OCI-LY7 (cell line): ENCODE measurements at regions of chr2 and their contacts with region 1.

Region 1: DNA sequence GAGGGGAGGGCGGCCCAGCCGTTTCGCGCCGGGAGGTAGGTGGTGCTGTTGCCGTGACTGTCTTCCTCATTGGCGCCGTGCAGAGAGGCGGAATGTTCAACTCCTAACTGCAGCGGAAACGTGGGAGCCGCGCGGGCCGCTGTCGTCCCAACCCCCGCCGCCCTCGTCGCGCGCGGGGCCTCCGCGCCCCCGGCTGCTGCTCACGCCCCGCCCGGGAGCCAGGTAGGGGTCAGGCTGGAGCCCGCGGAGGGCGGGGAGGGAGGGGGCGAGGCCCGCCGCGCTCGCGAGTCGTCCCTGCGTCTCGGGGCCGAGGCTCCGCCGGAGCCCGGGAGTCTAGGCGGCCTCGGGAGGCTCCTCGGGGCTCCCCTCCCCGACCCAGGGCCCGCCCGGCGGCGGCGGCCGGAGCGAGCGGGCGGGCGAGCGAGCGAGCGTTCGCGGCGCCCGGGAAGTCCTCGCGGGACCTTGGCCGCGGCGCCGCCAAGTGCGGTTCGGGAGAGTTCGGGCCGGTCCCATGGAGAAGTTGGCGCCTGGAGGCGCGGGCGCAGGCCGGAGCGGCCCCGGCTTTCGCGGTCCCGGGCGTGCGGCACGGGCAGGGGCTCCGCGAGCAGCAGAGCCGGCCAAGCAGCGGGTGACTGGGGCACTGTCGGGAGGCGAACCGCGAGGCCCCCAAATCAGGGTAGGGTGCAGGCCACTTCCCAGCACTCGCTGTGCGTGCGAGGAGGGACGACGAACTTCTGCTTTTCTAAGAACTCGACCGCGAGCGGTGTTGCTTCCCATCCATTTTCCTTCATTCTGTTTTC is at the start of gene MAP3K20:
- DNase-seq: peak; percentile 78
- H3K4me3 ChIP-seq: peak within 1 kb of the TSS; percentile 76
- H3K27ac ChIP-seq: peak within 1 kb of the TSS; percentile 39
- H3K4me1 ChIP-seq: peaks cover 14% of the 10 kb centered on the region
- CTCF ChIP-seq: peak; percentile 61
- total RNA-seq, gene MAP3K20: 8.2 and 9.1 TPM in 2 replicates

Region 2: GRCh38 chr2:173059927-173060565 is 15.9 kb before region 1 on chr2:
- CTCF ChIA-PET with region 1: interaction called, 5 read pairs
- POLR2A ChIA-PET with region 1: interaction called, 12 read pairs
- intact Hi-C with region 1: no loop called
- DNase-seq: peak; percentile 17
- H3K4me3 ChIP-seq: peak overlapping the region; percentile 20
- H3K27ac ChIP-seq: peak overlapping the region; percentile 57
- H3K4me1 ChIP-seq: peaks cover 23% of the 10 kb centered on the region
- CTCF ChIP-seq: no peak

Region 3: GRCh38 chr2:173119069-173119807 is 43.3 kb after region 1 on chr2:
- CTCF ChIA-PET with region 1: no interaction called
- POLR2A ChIA-PET with region 1: interaction called, 11 read pairs
- intact Hi-C with region 1: no loop called
- DNase-seq: no peak
- H3K4me3 ChIP-seq: no peak overlapping the region
- H3K27ac ChIP-seq: no peak overlapping the region
- H3K4me1 ChIP-seq: no peaks in the 10 kb centered on the region
- CTCF ChIP-seq: no peak

Region 4: GRCh38 chr2:173210270-173211196 is 134.6 kb after region 1 on chr2:
- CTCF ChIA-PET with region 1: no interaction called
- POLR2A ChIA-PET with region 1: interaction called, 6 read pairs
- intact Hi-C with region 1: loop called (anchors 5 kb)
- DNase-seq: peak; percentile 65
- H3K4me3 ChIP-seq: no peak overlapping the region
- H3K27ac ChIP-seq: no peak overlapping the region
- H3K4me1 ChIP-seq: no peaks in the 10 kb centered on the region
- CTCF ChIP-seq: peak; percentile 95